Astrocyte of the cerebellum (primary cell): ENCODE measurements at regions of chr22 and their contacts with region 1.

Region 1: DNA sequence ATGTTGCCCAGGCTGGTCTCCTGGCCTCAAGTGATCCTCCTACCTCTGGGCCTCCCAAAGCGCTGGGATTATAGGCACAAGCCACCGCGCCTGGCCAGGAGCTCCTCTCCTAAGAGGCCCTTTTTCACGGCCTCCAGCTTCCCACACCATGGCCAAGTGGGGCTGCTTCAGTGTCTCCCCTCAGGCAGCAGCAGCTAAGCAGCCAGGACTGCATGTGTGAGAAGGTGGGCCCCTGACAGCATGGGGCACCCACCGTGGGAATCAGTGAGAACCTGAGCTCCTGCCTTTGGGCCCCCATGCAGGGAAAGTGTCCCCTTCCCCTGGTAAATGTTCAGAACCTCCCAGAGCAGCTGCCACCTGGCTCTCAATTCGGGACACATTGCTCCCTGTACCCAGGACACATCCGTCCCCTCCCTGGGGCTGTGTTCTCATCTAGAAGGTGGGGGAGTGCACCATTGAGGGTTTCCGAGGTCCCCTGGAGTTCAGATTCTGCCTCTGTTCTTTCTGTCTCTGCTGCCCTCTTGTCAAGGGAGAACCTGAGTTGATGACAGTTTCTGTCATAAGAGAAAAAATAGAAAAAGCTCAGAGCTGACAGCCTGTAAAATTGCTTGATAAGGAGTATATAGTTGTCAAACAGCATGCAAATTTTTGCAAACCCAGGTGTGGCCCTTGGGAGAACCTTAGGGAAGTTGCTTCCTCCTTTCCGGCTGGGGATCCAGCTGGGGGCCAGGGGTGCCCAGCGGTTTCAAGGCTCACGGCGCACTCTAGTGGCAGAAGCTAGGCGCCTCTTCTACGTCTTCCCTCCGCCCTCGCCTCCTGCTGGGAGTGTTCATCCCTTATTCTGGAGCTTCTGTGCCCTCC is 29.7 kb downstream of the FAM83F start:
- DNase-seq: no peak
- H3K4me3 ChIP-seq: no peak overlapping the region
- CTCF ChIP-seq: peak; percentile 93

Region 2: GRCh38 chr22:39556970-39557841 is 467.2 kb before region 1 on chr22:
- in situ Hi-C with region 1: loop called (anchors 25 kb)
- DNase-seq: no peak
- H3K4me3 ChIP-seq: no peak overlapping the region
- CTCF ChIP-seq: no peak

Region 3: DNA sequence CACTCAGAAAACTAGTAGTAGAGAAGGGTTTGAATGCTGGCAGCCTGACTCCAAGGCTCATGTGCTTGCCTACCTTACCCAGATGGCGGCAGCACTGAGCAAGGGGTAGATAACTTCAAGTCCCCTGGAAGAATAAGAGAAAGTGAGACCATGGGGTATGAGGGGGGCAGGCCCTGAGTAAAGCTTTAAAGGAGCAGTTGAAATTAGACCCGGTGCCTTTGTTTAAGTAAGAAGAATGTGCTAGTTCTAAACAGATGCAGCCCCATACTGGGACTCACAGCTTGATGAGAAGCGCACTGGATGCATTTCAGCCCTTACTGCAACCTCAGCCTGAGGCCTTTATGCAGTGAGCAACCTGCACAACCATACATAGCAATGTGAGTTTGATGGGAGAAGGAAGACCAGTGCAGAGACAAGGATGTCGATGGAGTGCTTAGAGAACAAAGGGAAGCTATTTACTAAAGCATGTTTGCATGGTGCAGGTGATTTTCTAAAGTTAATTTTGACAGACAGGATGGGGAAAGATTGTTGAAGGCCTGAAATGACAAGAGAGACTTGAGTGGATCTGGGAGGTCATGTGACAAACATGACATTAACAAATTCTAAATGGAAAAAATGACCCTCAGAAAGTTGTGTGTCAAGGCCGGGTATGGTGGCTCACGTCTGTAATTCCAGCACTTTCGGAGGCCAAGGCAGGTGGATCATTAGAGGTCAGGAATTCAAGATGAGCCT is 91.3 kb before region 1 on chr22:
- in situ Hi-C with region 1: loop called (anchors 5 kb)
- DNase-seq: no peak
- H3K4me3 ChIP-seq: no peak overlapping the region
- CTCF ChIP-seq: peak; percentile 63

Region 4: GRCh38 chr22:40058265-40058664 is 33.8 kb after region 1 on chr22:
- in situ Hi-C with region 1: no loop called
- DNase-seq: no peak
- H3K4me3 ChIP-seq: no peak overlapping the region
- CTCF ChIP-seq: no peak